Tibial artery (tissue), 4 donors: ENCODE measurements at regions of chr6 and their contacts with region 1.

Region 1: GRCh38 chr6:17086469-17086868 is 15.4 kb upstream of the STMND1 start:
- DNase-seq: peak in 1 of 2 donors; percentile 25
- H3K4me3 ChIP-seq: no peak overlapping the region
- H3K27ac ChIP-seq: no peak overlapping the region
- H3K4me1 ChIP-seq: peaks cover 0 to 8% (median 0%) of the 10 kb centered on the region in 4 donors
- H3K27me3 ChIP-seq: peaks cover 0 to 4% of the 10 kb centered on the region in 2 donors
- CTCF ChIP-seq: peak; percentile 63 to 74

Region 2: DNA sequence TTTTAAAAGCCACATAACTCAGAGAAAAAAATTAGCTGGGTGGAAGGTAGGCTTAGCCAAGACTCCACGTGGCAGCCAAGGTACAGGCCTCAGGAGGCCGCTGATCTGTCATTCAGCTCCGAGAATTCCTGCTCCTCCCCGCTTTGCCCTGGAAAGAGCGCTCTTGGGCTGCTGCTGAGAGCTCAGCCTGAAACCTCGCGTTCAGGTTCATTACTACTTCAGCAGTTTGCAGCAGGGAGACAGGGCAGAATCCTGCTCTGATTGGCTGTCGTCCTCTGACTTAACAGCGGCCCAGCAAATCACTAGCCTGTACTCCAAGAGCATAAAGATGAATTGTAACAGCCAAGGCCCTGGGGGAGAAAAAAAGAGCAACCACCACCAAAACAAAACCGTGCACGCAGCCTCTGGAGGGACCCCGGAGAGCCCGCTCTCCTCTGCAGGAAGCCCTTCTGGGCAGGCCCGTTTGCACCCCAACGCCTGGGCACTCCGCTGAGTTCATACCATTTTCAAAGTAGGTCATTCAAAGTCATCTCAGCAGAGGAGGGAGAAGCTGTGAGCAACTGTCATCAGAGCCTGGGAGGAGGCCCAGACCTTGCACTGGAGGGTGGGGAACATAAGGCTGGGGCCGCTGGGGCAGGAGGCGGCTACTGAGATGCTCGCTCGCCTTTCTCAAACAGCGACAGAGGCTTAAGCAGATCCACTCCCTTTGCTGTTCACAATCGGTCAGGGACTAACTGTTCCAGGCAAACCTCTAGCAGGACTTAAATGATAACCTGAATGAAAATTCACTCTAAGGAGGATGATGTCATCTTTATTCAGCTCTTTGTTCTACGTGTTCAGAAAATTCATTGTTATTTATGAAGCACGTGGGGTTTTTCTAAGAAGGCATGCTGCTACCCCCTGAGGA is 282.9 kb before region 1 on chr6:
- intact Hi-C with region 1: loop called (anchors 10 kb)
- DNase-seq: peak in 1 of 2 donors; percentile 68
- H3K4me3 ChIP-seq: peak overlapping the region; percentile 29 to 44
- H3K27ac ChIP-seq: peak overlapping the region; percentile 30 to 40
- H3K4me1 ChIP-seq: peaks cover 0 to 32% (median 5%) of the 10 kb centered on the region in 4 donors
- H3K27me3 ChIP-seq: no peaks in the 10 kb centered on the region
- CTCF ChIP-seq: no peak

Region 3: DNA sequence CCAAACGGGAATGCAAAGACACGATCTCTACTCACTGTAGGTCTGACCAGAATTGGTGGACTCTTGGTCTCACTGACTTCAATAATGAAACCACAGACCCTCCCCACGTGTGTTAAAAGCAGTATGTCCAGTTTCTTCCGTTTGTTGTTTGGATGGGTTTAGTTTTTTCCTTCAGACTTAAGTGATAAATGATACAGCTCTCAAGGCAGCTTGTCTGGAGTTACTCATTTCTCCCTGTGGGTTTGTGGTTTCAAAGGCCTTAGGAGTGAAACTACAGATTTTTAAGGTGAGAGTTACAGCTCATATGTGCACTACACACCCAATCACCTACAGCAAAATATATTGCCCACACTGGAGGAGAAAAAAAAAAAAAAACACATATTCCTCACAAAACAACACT is 71.3 kb before region 1 on chr6:
- intact Hi-C with region 1: loop called (anchors 10 kb)
- DNase-seq: no peak
- H3K4me3 ChIP-seq: no peak overlapping the region
- H3K27ac ChIP-seq: no peak overlapping the region
- H3K4me1 ChIP-seq: peaks cover 0 to 21% (median 10%) of the 10 kb centered on the region in 4 donors
- H3K27me3 ChIP-seq: no peaks in the 10 kb centered on the region
- CTCF ChIP-seq: no peak